ENCODE measurements at regions of chr6 and their contacts with region 1.

Region 1: GRCh38 chr6:26156076-26156849 is 69.0 kb downstream of the HFE start:
- DNase-seq: peak; percentile 72 to 94 (median 83)
- H3K4me3 ChIP-seq: peak overlapping the region; percentile 84
- H3K4me3 Mint-ChIP-seq: peak overlapping the region; percentile 87 to 98 (median 94)
- H3K27ac ChIP-seq: peak overlapping the region; percentile 97
- H3K27ac Mint-ChIP-seq: peak overlapping the region; percentile 87 to 99 (median 96)
- H3K4me1 ChIP-seq: peaks cover 20% of the 10 kb centered on the region
- H3K4me1 Mint-ChIP-seq: peaks cover 26 to 47% (median 41%) of the 10 kb centered on the region in 3 donors
- H3K27me3 ChIP-seq: no peaks in the 10 kb centered on the region
- H3K27me3 Mint-ChIP-seq: peaks cover 0 to 1% of the 10 kb centered on the region in 2 donors

Region 2: DNA sequence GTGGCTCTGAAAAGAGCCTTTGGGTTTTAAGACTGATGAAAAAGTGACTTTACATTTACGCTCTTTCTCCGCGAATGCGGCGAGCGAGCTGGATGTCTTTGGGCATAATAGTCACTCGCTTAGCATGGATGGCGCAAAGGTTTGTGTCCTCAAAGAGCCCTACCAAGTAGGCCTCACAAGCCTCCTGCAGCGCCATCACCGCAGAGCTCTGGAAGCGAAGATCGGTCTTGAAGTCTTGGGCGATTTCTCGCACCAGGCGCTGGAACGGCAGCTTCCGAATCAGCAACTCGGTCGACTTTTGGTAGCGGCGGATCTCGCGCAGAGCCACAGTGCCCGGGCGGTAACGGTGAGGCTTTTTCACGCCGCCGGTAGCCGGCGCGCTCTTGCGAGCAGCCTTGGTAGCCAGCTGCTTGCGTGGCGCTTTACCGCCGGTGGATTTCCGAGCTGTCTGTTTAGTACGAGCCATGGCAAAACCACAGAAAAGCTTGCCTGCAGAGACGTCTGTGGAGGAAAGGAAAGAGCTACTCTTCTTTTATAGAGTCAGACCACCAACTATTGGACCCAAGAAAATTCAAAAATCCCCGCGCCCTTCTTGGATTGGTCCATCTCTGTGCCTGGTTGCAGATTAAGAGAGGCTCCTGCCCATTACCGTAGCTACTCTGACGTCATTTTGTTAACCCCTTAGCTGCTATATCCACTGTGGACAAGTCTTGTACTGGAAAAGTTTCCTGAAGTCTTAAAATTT is 124.5 kb before region 1 on chr6:
- CTCF ChIA-PET with region 1: interaction called, 13 read pairs
- POLR2A ChIA-PET with region 1: interaction called, 44 read pairs
- DNase-seq: peak; percentile 75 to 91 (median 86)
- H3K4me3 ChIP-seq: peak overlapping the region; percentile 70
- H3K4me3 Mint-ChIP-seq: peak overlapping the region; percentile 89 to 97 (median 95)
- H3K27ac ChIP-seq: peak overlapping the region; percentile 85
- H3K27ac Mint-ChIP-seq: peak overlapping the region; percentile 96 to 99 (median 98)
- H3K4me1 ChIP-seq: peaks cover 30% of the 10 kb centered on the region
- H3K4me1 Mint-ChIP-seq: peaks cover 47 to 69% (median 53%) of the 10 kb centered on the region in 3 donors
- H3K27me3 ChIP-seq: no peaks in the 10 kb centered on the region
- H3K27me3 Mint-ChIP-seq: peaks cover 0 to 6% of the 10 kb centered on the region in 2 donors

Region 3: GRCh38 chr6:26103770-26104456 is 52.4 kb before region 1 on chr6:
- CTCF ChIA-PET with region 1: interaction called, 12 read pairs
- POLR2A ChIA-PET with region 1: interaction called, 111 read pairs
- DNase-seq: peak; percentile 75 to 96 (median 93)
- H3K4me3 ChIP-seq: peak overlapping the region; percentile 51
- H3K4me3 Mint-ChIP-seq: peak overlapping the region; percentile 83 to 92 (median 87)
- H3K27ac ChIP-seq: peak overlapping the region; percentile 82
- H3K27ac Mint-ChIP-seq: peak overlapping the region; percentile 96 to 98 (median 97)
- H3K4me1 ChIP-seq: peaks cover 18% of the 10 kb centered on the region
- H3K4me1 Mint-ChIP-seq: peaks cover 16 to 20% (median 17%) of the 10 kb centered on the region in 3 donors
- H3K27me3 ChIP-seq: no peaks in the 10 kb centered on the region
- H3K27me3 Mint-ChIP-seq: peaks cover 0 to 4% of the 10 kb centered on the region in 2 donors

Region 4: GRCh38 chr6:26196846-26197648 is 40.8 kb after region 1 on chr6:
- CTCF ChIA-PET with region 1: interaction called, 95 read pairs
- POLR2A ChIA-PET with region 1: interaction called, 426 read pairs
- DNase-seq: peak; percentile 66 to 93 (median 90)
- H3K4me3 ChIP-seq: peak overlapping the region; percentile 84
- H3K4me3 Mint-ChIP-seq: peak overlapping the region; percentile 95 to 99 (median 96)
- H3K27ac ChIP-seq: peak overlapping the region; percentile 95
- H3K27ac Mint-ChIP-seq: peak overlapping the region; percentile 95 to 100 (median 98)
- H3K4me1 ChIP-seq: peaks cover 17% of the 10 kb centered on the region
- H3K4me1 Mint-ChIP-seq: peaks cover 33 to 63% (median 59%) of the 10 kb centered on the region in 3 donors
- H3K27me3 ChIP-seq: no peaks in the 10 kb centered on the region
- H3K27me3 Mint-ChIP-seq: peaks cover 0 to 4% of the 10 kb centered on the region in 2 donors

Region 5: GRCh38 chr6:26249957-26250697 is 93.9 kb after region 1 on chr6:
- CTCF ChIA-PET with region 1: interaction called, 7 read pairs
- POLR2A ChIA-PET with region 1: interaction called, 78 read pairs
- DNase-seq: peak; percentile 58 to 89 (median 77)
- H3K4me3 ChIP-seq: peak overlapping the region; percentile 94
- H3K4me3 Mint-ChIP-seq: peak overlapping the region; percentile 95 to 99 (median 97)
- H3K27ac ChIP-seq: peak overlapping the region; percentile 74
- H3K27ac Mint-ChIP-seq: peak overlapping the region; percentile 56 to 96 (median 93)
- H3K4me1 ChIP-seq: peaks cover 10% of the 10 kb centered on the region
- H3K4me1 Mint-ChIP-seq: peaks cover 36 to 58% (median 48%) of the 10 kb centered on the region in 3 donors
- H3K27me3 ChIP-seq: no peaks in the 10 kb centered on the region
- H3K27me3 Mint-ChIP-seq: no peaks in the 10 kb centered on the region

Region 6: GRCh38 chr6:27132532-27133280 is 976.4 kb after region 1 on chr6:
- CTCF ChIA-PET with region 1: interaction called, 3 read pairs
- POLR2A ChIA-PET with region 1: interaction called, 31 read pairs
- DNase-seq: peak; percentile 77 to 98 (median 96)
- H3K4me3 ChIP-seq: peak overlapping the region; percentile 75
- H3K4me3 Mint-ChIP-seq: no peak overlapping the region
- H3K27ac ChIP-seq: peak overlapping the region; percentile 89
- H3K27ac Mint-ChIP-seq: no peak overlapping the region
- H3K4me1 ChIP-seq: peaks cover 20% of the 10 kb centered on the region
- H3K4me1 Mint-ChIP-seq: peaks cover 7 to 21% (median 16%) of the 10 kb centered on the region in 3 donors
- H3K27me3 ChIP-seq: no peaks in the 10 kb centered on the region
- H3K27me3 Mint-ChIP-seq: peaks cover 0 to 2% of the 10 kb centered on the region in 2 donors

Region 7: GRCh38 chr6:27864906-27865849 is 1708.9 kb after region 1 on chr6:
- CTCF ChIA-PET with region 1: no interaction called
- POLR2A ChIA-PET with region 1: interaction called, 17 read pairs
- DNase-seq: peak; percentile 42 to 89 (median 81)
- H3K4me3 ChIP-seq: peak overlapping the region; percentile 63
- H3K4me3 Mint-ChIP-seq: peak overlapping the region; percentile 93 to 99 (median 96)
- H3K27ac ChIP-seq: peak overlapping the region; percentile 83
- H3K27ac Mint-ChIP-seq: peak overlapping the region; percentile 87 to 99 (median 97)
- H3K4me1 ChIP-seq: peaks cover 25% of the 10 kb centered on the region
- H3K4me1 Mint-ChIP-seq: peaks cover 36 to 50% (median 45%) of the 10 kb centered on the region in 3 donors
- H3K27me3 ChIP-seq: no peaks in the 10 kb centered on the region
- H3K27me3 Mint-ChIP-seq: no peaks in the 10 kb centered on the region

Measured in CD8-positive, alpha-beta memory T cell (primary cell).